MCF 10A (cell line): ENCODE measurements at regions of chr13 and their contacts with region 1.

Region 1: DNA sequence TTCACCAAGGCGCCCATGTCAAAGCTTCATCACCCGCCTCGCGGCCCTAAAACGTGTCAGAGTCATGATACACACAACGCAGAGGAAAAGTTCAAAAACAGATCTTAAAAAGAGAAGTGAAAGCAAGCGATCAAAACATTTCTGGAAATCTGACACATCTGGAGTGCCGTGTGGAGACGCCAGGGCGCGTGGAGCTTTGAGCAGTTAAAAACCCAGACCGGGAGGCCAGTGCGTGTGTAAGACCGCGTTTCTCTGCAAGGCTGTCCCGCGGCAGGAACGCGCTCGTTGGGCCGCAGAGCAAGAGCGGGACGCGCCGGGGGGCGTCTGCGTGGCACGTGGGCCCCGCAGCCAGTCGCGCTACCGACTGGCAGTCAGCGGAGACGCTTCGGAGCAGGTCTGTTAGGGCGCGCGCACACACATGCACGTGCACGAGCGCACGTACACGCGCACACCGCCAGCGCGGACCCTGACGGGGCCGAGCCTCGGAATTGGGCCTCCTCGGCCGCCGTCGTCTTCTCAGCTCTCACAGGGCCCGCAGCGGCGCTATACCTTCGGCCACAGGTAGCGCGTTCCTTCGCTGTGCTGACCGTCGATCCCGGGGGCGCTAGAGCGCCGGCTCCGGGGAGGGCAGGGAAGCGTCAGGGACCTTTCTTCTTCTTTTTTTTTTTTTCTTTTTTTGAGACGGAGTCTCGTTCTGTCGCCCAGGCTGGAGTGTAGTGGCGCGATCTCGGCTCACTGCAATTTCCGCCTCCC is 35.8 kb downstream of the RNF6 start:
- DNase-seq: peak; percentile 94
- H3K4me3 Mint-ChIP-seq: peak overlapping the region; percentile 96
- H3K27ac Mint-ChIP-seq: peak overlapping the region; percentile 93
- H3K4me1 Mint-ChIP-seq: peaks cover 5% of the 10 kb centered on the region
- H3K27me3 Mint-ChIP-seq: no peaks in the 10 kb centered on the region
- CTCF ChIP-seq: peak; percentile 50

Region 2: DNA sequence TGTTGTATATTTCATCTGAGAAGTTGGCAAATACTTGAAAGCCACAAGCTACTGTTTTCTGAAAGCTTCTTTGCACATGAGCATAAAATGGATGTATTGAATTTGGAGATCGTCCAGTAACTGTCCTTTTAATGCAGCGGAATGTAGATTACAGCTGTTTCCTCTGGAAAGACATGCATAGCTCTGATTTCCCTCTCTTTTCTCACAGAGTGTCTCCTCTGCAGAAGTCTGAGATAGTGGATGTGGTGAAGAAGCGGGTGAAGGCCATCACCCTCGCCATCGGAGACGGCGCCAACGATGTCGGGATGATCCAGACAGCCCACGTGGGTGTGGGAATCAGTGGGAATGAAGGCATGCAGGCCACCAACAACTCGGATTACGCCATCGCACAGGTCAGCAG is 417.5 kb before region 1 on chr13:
- CTCF ChIA-PET with region 1: no interaction called
- POLR2A ChIA-PET with region 1: no interaction called
- intact Hi-C with region 1: no loop called
- DNase-seq: no peak
- H3K4me3 Mint-ChIP-seq: no peak overlapping the region
- H3K27ac Mint-ChIP-seq: no peak overlapping the region
- H3K4me1 Mint-ChIP-seq: peaks cover 7% of the 10 kb centered on the region
- H3K27me3 Mint-ChIP-seq: no peaks in the 10 kb centered on the region
- CTCF ChIP-seq: no peak

Region 3: DNA sequence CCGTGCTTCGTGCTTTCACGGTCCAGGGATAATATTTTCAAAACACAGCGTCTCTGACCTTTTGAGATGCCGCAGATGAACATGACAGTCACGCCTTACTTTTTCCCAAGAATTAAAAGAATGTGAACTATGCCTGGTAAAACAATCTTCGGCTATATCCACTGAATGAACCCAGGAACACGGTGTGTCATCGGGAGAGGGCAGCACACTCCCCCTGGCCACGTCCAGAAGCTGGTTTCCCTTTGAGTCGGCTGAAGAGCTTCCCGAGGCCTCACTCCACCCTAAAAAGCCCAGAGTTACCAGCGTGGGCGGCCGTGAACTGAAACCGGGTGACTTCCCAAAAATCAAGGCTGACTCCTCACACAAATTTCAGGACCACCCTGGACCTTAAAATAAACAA is 111.6 kb before region 1 on chr13:
- CTCF ChIA-PET with region 1: interaction called, 10 read pairs
- POLR2A ChIA-PET with region 1: no interaction called
- intact Hi-C with region 1: no loop called
- DNase-seq: peak; percentile 46
- H3K4me3 Mint-ChIP-seq: peak overlapping the region; percentile 40
- H3K27ac Mint-ChIP-seq: peak overlapping the region; percentile 51
- H3K4me1 Mint-ChIP-seq: no peaks in the 10 kb centered on the region
- H3K27me3 Mint-ChIP-seq: no peaks in the 10 kb centered on the region
- CTCF ChIP-seq: peak; percentile 8

Region 4: DNA sequence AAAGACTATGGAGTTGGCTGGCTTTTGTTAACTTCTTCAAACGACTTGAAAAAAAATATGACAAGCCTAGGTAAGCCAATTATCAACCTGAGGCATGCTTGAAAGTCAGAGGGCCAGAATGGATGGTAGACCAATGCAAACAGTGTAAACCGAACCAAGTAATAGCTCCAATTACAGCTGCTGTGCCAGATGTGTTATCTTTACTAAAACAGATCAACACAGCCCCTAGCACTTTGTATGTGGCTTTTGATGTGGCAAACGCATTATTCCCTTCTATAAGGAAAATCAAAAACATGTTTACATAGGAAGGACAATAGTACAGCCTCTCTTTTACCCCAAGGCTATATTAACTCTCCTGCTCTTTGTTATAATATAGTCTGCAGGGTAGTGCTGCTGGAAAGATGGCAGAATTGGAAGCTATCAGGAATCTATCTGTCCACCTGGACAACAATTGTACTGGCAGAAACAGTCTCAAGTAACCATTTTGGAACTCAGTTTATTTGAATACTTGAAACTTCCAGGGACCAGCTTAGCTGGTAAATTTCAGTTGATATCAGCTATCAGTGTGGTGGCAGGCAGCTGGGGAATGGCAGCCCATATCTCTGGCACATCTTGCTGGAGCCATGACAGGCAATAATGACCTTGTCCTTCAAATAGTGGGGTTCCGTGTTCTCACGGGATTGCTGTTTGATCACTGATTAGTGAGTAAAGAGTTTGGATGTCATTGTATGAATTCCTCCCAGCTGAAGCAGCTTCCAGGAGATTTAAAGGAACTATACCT is 226.8 kb after region 1 on chr13:
- CTCF ChIA-PET with region 1: interaction called, 11 read pairs
- POLR2A ChIA-PET with region 1: no interaction called
- intact Hi-C with region 1: no loop called
- DNase-seq: no peak
- H3K4me3 Mint-ChIP-seq: no peak overlapping the region
- H3K27ac Mint-ChIP-seq: no peak overlapping the region
- H3K4me1 Mint-ChIP-seq: no peaks in the 10 kb centered on the region
- H3K27me3 Mint-ChIP-seq: no peaks in the 10 kb centered on the region
- CTCF ChIP-seq: no peak

Region 5: DNA sequence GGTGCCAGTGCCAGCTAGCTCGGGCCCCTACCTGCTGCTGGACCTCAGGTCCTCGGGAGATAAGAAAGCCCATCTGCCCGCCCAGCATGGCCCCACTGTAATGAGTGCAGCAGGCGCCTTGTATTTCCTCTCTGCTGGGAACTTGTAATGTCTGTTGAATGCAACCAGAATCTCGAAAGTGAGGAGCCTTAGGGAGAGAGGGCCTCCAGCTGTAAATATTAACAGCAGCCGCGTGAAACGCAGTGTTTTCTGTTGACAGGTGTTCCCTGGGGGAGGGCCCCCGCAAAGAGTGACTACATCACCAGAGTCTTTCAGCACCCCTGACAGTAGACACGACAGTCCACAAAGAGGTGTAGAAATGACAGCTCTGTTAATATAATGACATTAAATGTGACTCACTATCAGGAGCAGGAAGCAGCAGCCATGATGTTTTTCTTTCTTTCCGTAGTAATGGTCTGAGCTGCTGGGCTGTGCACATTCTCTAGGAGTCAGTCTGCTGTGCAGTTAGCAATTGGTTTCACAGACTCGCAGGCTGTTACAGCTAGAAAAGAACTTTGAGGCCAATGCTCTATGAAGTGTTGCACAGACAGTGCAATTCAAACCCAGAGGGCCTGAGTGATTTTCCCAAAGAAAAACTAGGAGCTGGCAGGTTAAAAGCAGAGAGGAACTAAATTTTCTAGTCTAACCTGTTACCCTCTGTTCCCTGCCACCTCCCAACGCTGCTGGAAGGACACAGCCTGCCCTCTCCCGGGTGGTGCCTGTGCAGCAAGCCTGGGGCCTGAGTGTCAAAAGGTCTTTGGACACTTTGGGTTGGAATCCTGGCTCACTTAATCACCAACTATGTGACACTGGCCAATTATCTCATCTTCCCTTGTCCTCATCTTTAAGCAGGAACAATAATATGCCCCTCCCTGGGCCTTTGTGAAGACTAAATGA is 312.6 kb after region 1 on chr13:
- CTCF ChIA-PET with region 1: interaction called, 64 read pairs
- POLR2A ChIA-PET with region 1: interaction called, 5 read pairs
- intact Hi-C with region 1: loop called (anchors 1 kb)
- DNase-seq: no peak
- H3K4me3 Mint-ChIP-seq: no peak overlapping the region
- H3K27ac Mint-ChIP-seq: no peak overlapping the region
- H3K4me1 Mint-ChIP-seq: peaks cover 17% of the 10 kb centered on the region
- H3K27me3 Mint-ChIP-seq: no peaks in the 10 kb centered on the region
- CTCF ChIP-seq: no peak

Region 6: DNA sequence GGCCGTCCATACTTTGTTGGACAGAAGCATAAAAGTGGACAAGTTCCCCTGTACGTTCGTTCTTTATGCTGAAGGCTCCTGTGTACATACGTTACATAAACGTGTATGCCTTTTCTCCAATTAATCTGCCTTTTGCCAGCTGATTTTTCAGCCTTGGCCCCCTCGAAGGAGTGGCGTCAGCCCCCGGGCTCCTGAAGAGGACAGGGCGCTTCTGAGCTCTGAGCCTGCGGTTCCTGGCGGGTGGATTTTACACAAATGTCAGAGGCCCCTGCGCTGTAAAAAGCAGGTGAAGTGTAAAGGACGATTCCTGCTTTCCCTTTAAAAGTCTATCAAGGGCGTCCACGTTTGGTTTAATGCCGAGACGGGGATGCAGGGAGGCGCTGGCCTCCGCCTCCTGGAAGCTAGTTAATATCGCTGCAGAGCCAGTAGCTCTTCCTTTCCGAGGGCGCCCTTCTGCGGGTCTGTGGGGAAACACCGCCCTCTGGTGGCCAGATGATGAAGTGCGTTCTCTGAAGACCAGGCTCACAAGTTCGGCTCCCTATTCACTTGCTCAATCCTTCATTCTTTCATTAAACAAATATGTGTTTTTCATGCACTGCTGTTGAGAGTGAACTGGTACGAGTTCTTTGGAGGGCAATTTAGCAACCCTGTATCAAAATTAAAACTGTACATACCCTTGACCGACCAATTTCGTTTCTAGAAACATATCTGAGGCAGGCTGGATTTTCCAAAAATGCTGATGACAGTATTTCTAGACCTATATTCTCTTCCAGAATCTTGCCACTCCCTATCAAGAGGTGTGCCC is 512.3 kb after region 1 on chr13:
- CTCF ChIA-PET with region 1: interaction called, 41 read pairs
- POLR2A ChIA-PET with region 1: interaction called, 29 read pairs
- intact Hi-C with region 1: loop called (anchors 1 kb)
- DNase-seq: peak; percentile 79
- H3K4me3 Mint-ChIP-seq: no peak overlapping the region
- H3K27ac Mint-ChIP-seq: no peak overlapping the region
- H3K4me1 Mint-ChIP-seq: peaks cover 11% of the 10 kb centered on the region
- H3K27me3 Mint-ChIP-seq: peaks cover 17% of the 10 kb centered on the region
- CTCF ChIP-seq: peak; percentile 94